Body of pancreas (tissue), 4 donors: ENCODE measurements at regions of chr4 and their contacts with region 1.

Region 1: DNA sequence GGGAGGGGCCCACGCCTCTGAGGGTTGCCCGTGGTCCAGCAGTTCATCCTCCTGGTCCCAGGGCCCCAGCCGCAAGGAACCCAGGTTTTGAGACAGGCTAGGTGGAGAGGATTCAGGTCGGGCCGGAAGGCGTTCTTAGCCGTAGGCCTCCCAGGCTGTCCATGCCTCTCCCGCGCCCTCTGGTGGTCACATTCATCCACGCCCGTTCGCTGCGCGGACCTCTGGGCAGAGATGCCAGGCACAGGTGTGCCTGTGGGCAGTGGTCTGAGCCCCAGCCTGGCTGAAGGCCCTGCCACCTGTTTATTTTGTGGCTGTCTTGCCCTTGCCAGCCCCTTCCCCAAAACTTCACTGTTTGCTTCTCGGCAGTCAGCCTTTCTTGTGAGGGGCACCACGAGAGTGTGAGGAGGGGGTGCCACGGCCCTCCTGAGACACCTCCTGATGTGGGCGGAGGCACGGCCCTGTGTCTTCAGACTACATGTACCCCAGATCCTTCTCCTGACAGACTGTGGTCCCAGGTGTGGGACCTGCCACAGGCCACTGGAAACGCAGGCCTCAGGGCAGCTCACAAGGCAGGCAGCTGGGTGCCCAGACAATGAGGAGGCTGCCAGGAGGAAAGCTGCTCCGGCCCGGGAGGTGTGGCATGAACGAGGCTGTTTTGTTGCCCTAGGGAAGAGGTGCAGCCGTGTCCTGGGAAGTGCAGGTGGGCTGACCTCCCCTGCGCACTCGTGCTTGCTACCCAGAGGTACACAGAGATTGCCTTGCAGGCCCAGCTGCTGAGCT is 5.0 kb downstream of the UVSSA start:
- DNase-seq: peak; percentile 88 to 91 (median 90)
- ATAC-seq: peak; percentile 34
- H3K4me3 ChIP-seq: no peak overlapping the region
- H3K27ac ChIP-seq: peak overlapping the region in 1 of 4 donors; percentile 44
- H3K4me1 ChIP-seq: peaks cover 22% of the 10 kb centered on the region
- H3K27me3 ChIP-seq: no peaks in the 10 kb centered on the region
- CTCF ChIP-seq: peak; percentile 90 to 94 (median 92)
- POLR2A ChIP-seq: no peak

Region 2: GRCh38 chr4:1512738-1513660 is 161.0 kb after region 1 on chr4:
- intact Hi-C with region 1: loop called (anchors 5 kb)
- DNase-seq: peak; percentile 43 to 70 (median 46)
- ATAC-seq: peak; percentile 77
- H3K4me3 ChIP-seq: no peak overlapping the region
- H3K27ac ChIP-seq: no peak overlapping the region
- H3K4me1 ChIP-seq: peaks cover 6% of the 10 kb centered on the region
- H3K27me3 ChIP-seq: peaks cover 0 to 7% of the 10 kb centered on the region in 2 donors
- CTCF ChIP-seq: peak in 5 of 7 experiments; percentile 26 to 81 (median 74)
- POLR2A ChIP-seq: no peak

Region 3: GRCh38 chr4:1628892-1629698 is 277.1 kb after region 1 on chr4:
- intact Hi-C with region 1: loop called (anchors 10 kb)
- DNase-seq: peak; percentile 52 to 74 (median 64)
- ATAC-seq: peak; percentile 64
- H3K4me3 ChIP-seq: no peak overlapping the region
- H3K27ac ChIP-seq: no peak overlapping the region
- H3K4me1 ChIP-seq: no peaks in the 10 kb centered on the region
- H3K27me3 ChIP-seq: no peaks in the 10 kb centered on the region
- CTCF ChIP-seq: peak; percentile 74 to 93 (median 86)
- POLR2A ChIP-seq: no peak

Region 4: GRCh38 chr4:1721004-1721665 is 369.1 kb after region 1 on chr4 and contains the starts of genes TACC3 and TMEM129:
- intact Hi-C with region 1: loop called (anchors 5 kb)
- DNase-seq: peak; percentile 97 to 98 (median 98)
- ATAC-seq: peak; percentile 91
- H3K4me3 ChIP-seq: peak within 1 kb of the TSS; percentile 50 to 60
- H3K27ac ChIP-seq: peak within 1 kb of the TSS; percentile 92 to 97 (median 94)
- H3K4me1 ChIP-seq: peaks cover 58% of the 10 kb centered on the region
- H3K27me3 ChIP-seq: no peaks in the 10 kb centered on the region
- CTCF ChIP-seq: peak in 1 of 7 experiments; percentile 29
- POLR2A ChIP-seq: peak; percentile 60 to 66 (median 61)
- total RNA-seq, gene TACC3: 5.7 to 8.9 TPM
- total RNA-seq, gene TMEM129: 26.7 to 53.1 TPM